ENCODE measurements at regions of chr6 and their contacts with region 1.

Region 1: DNA sequence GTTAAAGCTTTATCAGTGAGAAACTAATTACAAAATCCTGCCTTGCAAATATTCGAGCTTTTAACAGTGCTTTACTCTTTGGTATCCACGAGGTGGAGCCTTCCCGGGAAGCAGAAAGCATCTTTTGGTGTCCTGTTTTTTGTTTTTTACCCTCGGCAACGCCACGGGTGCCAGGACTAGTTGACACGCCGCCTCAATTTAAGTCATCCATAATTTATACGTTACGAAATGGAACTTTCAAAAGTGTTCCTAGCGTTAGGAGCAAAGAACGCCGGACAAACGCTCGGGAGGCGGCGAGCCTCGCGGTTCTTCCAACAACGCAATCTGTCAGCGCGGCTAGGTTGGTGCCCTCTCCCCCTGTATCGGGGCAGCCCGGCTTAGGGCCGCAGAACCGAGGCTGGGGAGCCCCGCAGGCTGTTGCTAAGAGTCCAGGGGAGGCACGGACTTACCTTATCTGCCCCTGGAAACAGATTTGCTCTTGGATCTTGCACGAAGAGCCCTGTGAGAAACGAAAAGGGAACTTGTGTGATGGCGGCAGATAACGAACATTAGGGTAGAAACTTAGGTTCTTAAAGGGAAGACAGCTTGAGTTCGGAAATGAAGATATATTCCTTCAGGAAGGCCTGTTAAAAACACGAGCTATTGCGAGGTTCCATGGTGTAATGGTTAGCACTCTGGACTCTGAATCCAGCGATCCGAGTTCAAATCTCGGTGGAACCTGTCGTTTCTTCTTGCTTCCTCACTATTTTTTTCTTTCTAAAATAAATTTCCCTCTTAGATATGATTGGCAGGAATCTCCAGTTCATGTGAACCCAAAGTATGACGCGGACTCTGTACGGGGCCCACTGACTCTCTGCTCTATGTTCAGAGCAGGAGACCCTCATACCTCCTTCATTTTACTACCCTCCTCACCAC is 46.2 kb upstream of the ZNF184 start:
- DNase-seq: peak; percentile 88
- H3K4me3 Mint-ChIP-seq: peak overlapping the region; percentile 92
- H3K27ac Mint-ChIP-seq: peak overlapping the region; percentile 85
- H3K4me1 Mint-ChIP-seq: no peaks in the 10 kb centered on the region
- H3K27me3 Mint-ChIP-seq: no peaks in the 10 kb centered on the region
- CTCF ChIP-seq: peak; percentile 73

Region 2: DNA sequence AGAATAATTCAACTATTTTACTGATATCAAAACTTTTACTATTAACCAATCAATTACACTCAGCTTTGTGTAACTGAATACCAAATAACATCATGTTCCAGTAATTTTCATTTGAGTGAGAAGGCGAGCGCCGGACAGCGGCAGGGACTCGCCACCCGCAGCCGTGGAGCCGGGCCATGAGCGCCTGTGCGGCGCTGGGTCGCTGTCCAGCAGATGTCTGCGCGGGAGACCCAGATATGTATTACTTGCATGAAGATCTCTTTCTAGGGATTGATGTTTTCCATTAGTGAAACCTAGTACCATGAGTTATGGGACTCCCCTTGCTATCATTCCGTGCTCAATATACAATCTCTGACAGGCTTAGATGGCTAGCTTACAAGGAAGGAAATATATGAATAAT is 516.7 kb before region 1 on chr6:
- CTCF ChIA-PET with region 1: no interaction called
- POLR2A ChIA-PET with region 1: no interaction called
- intact Hi-C with region 1: no loop called
- DNase-seq: no peak
- H3K4me3 Mint-ChIP-seq: no peak overlapping the region
- H3K27ac Mint-ChIP-seq: no peak overlapping the region
- H3K4me1 Mint-ChIP-seq: no peaks in the 10 kb centered on the region
- H3K27me3 Mint-ChIP-seq: no peaks in the 10 kb centered on the region
- CTCF ChIP-seq: no peak

Region 3: GRCh38 chr6:27177485-27178406 is 341.4 kb before region 1 on chr6:
- CTCF ChIA-PET with region 1: interaction called, 4 read pairs
- POLR2A ChIA-PET with region 1: interaction called, 11 read pairs
- intact Hi-C with region 1: no loop called
- DNase-seq: peak; percentile 92
- H3K4me3 Mint-ChIP-seq: peak overlapping the region; percentile 87
- H3K27ac Mint-ChIP-seq: peak overlapping the region; percentile 92
- H3K4me1 Mint-ChIP-seq: no peaks in the 10 kb centered on the region
- H3K27me3 Mint-ChIP-seq: no peaks in the 10 kb centered on the region
- CTCF ChIP-seq: peak; percentile 36

Region 4: DNA sequence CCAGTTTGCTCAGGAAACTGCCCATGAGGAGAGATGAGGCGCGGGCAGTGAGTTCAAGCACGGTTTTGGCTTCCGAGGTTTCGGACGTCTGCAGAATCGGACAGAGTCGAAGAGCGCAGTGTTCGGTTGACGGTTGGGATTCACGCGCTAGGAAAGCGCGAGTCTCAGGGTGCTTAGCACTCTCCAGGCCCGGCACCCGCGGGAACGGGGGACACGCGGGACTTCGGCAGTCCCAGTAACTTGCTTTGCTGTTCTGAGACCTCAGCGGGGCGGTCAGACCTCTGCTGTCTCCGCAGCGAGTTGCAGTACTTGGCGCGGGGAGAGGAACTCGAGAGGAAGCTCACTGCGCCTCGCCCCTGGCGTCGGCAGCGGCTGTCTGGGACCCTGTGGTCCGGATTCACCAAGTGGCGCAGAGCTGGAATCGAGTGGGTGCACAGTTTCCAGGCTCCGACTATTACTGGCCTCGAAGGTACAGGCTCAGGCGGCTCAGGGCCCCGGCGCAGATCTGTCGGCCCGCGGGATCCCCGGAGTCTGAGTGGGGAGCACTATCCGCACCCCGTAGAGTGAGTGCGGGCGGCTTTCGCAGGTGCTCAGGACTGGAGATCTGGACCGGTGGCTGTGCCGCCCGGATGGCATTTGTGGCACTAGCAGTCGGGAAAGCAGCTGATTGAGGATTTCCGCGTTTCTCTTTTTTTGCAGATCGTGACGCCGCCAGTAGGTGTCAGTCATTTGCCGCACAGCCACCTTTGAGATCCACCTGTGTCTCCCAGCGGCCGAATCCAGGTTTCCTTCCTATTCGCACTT is 206.8 kb before region 1 on chr6 and contains the start of gene POM121L2:
- CTCF ChIA-PET with region 1: interaction called, 5 read pairs
- POLR2A ChIA-PET with region 1: interaction called, 5 read pairs
- intact Hi-C with region 1: loop called (anchors 1 kb)
- DNase-seq: peak; percentile 84
- H3K4me3 Mint-ChIP-seq: peak within 1 kb of the TSS; percentile 73
- H3K27ac Mint-ChIP-seq: no peak within 1 kb of the TSS
- H3K4me1 Mint-ChIP-seq: no peaks in the 10 kb centered on the region
- H3K27me3 Mint-ChIP-seq: peaks cover 12% of the 10 kb centered on the region
- CTCF ChIP-seq: peak; percentile 87
- total RNA-seq, gene POM121L2: not detected in 2 replicates

Region 5: DNA sequence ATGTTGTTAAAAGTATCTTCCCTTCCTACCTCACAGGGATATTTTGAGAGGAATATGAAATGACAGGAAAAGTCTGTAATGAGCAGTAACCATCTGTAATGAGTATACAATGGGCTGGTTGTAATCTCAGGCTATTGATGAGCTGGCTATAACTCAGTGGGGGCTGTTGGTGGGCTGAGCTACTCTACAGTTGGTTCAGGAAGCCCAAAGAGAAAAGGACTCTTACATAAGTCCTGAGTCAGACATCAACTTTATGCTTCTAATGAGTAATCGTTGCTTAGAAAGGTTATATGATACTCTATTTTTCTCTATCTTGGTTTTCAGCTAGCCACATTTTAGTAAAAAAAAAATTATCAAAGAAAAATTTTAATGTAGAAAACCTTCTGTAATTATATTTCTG is 104.1 kb before region 1 on chr6:
- CTCF ChIA-PET with region 1: no interaction called
- POLR2A ChIA-PET with region 1: no interaction called
- intact Hi-C with region 1: no loop called
- DNase-seq: no peak
- H3K4me3 Mint-ChIP-seq: no peak overlapping the region
- H3K27ac Mint-ChIP-seq: no peak overlapping the region
- H3K4me1 Mint-ChIP-seq: no peaks in the 10 kb centered on the region
- H3K27me3 Mint-ChIP-seq: no peaks in the 10 kb centered on the region
- CTCF ChIP-seq: no peak

Region 6: DNA sequence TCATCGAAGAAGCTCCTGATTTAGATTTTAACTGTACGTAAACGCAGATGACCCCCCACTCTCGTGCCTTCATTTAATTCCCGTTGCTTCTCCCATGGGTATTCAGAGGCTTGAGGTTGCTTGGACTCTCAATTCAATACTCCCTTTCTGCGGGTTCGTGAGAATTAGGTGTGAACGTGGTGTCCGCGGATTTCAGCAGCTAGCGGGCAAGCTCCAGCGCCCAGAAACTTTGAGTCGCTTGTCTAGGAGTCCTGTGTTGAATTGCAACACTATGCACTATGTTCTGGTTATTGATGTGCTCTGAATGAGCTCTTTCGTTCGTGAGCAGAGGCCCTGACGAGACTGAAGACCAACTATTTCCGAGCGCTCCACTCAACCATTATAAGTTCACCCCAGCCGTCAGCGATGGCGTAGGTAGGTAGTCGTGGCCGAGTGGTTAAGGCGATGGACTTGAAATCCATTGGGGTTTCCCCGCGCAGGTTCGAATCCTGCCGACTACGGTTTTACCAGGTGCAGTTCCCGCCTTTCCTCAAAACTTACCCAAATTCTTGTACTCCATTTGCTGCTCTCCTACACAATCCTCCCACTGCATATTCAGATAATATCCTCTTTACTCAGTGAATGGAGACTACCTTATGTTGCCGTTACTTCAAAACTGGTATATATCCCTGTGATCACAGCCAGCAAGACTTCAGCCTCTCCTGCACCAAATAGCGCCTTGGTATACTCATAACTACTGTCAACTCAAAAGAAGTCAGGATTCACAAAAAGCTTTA is 26.3 kb after region 1 on chr6:
- CTCF ChIA-PET with region 1: interaction called, 14 read pairs
- POLR2A ChIA-PET with region 1: interaction called, 37 read pairs
- intact Hi-C with region 1: loop called (anchors 1 kb)
- DNase-seq: peak; percentile 87
- H3K4me3 Mint-ChIP-seq: peak overlapping the region; percentile 83
- H3K27ac Mint-ChIP-seq: peak overlapping the region; percentile 91
- H3K4me1 Mint-ChIP-seq: peaks cover 22% of the 10 kb centered on the region
- H3K27me3 Mint-ChIP-seq: no peaks in the 10 kb centered on the region
- CTCF ChIP-seq: no peak

Region 7: GRCh38 chr6:27617700-27618689 is 98.9 kb after region 1 on chr6:
- CTCF ChIA-PET with region 1: interaction called, 50 read pairs
- POLR2A ChIA-PET with region 1: interaction called, 24 read pairs
- intact Hi-C with region 1: no loop called
- DNase-seq: peak; percentile 68
- H3K4me3 Mint-ChIP-seq: peak overlapping the region; percentile 89
- H3K27ac Mint-ChIP-seq: peak overlapping the region; percentile 86
- H3K4me1 Mint-ChIP-seq: peaks cover 6% of the 10 kb centered on the region
- H3K27me3 Mint-ChIP-seq: no peaks in the 10 kb centered on the region
- CTCF ChIP-seq: peak; percentile 9

Region 8: DNA sequence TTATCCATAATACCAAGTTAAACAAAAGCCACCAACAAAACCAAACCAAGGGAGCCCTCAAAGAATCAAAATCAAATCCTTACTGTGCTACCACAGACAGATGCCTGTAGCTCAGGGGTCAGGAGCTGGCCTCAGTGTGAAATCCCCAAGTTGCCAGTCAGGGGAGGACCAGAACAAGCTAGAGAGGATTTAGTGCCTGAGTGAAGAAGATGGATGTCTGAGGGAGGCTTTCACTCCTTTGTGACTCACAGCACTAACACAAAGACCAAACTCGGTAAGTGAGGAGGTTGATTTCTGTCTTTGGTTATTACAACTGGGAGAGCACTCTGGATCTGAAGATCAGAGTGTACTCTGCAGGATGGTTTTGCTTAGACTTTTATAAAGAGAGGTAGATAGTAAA is 143.6 kb after region 1 on chr6:
- CTCF ChIA-PET with region 1: no interaction called
- POLR2A ChIA-PET with region 1: no interaction called
- intact Hi-C with region 1: no loop called
- DNase-seq: no peak
- H3K4me3 Mint-ChIP-seq: no peak overlapping the region
- H3K27ac Mint-ChIP-seq: no peak overlapping the region
- H3K4me1 Mint-ChIP-seq: peaks cover 6% of the 10 kb centered on the region
- H3K27me3 Mint-ChIP-seq: no peaks in the 10 kb centered on the region
- CTCF ChIP-seq: no peak

Region 9: DNA sequence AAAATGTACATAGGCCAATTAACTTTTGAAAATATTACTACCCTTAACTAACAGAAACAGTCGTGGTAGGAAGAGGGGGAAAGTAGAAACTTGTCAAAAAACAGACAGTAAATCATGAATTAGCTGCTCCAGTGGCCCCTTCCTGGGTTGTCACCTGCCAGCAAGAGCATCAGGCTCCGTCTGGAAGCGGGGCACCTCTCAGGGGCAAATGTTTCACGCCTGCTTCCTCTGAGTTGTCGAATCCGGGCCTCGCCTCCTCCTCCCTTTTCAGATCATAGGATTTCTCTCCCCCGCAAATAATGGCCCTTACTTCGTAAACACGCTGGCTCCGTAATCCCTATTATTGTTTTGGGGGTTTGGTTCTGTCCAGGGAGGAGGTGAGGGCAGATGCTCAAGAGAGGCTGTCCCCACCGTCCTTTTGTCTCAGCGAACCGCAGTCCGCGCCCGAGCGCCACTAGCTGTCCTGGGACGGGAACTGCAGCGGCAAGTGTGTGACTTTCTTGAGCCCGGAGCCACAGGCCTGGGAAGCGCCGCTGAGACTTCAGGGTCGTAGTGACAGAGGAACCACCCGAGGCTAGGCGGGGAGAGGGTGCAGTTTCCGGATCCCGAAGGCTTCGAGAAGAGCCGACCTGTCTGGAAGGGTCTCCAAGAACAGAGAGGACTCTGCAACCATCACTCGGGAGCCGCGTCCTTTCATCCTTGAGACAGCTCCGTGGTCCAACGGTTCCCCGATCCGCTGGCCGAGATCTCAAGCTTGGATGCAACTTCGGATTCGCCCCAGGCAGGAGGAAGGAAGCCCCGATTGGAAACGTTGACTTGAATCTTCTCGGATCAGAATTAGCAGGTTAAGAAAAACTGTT is 168.2 kb after region 1 on chr6:
- CTCF ChIA-PET with region 1: interaction called, 4 read pairs
- POLR2A ChIA-PET with region 1: interaction called, 6 read pairs
- intact Hi-C with region 1: loop called (anchors 2 kb)
- DNase-seq: peak; percentile 87
- H3K4me3 Mint-ChIP-seq: peak overlapping the region; percentile 92
- H3K27ac Mint-ChIP-seq: peak overlapping the region; percentile 89
- H3K4me1 Mint-ChIP-seq: peaks cover 5% of the 10 kb centered on the region
- H3K27me3 Mint-ChIP-seq: no peaks in the 10 kb centered on the region
- CTCF ChIP-seq: peak; percentile 86

Region 10: GRCh38 chr6:27902335-27903314 is 383.5 kb after region 1 on chr6:
- CTCF ChIA-PET with region 1: no interaction called
- POLR2A ChIA-PET with region 1: no interaction called
- intact Hi-C with region 1: loop called (anchors 5 kb)
- DNase-seq: peak; percentile 89
- H3K4me3 Mint-ChIP-seq: peak overlapping the region; percentile 78
- H3K27ac Mint-ChIP-seq: peak overlapping the region; percentile 81
- H3K4me1 Mint-ChIP-seq: peaks cover 5% of the 10 kb centered on the region
- H3K27me3 Mint-ChIP-seq: no peaks in the 10 kb centered on the region
- CTCF ChIP-seq: no peak